ENCODE measurements at regions of chr12 and their contacts with region 1.

Region 1: GRCh38 chr12:94535510-94535921 is 75.8 kb upstream of the CEP83 start:
- DNase-seq: peak in 1 of 2 donors; percentile 26
- H3K4me3 ChIP-seq: no peak overlapping the region
- H3K27ac ChIP-seq: no peak overlapping the region
- H3K4me1 ChIP-seq: peaks cover 0 to 5% (median 0%) of the 10 kb centered on the region in 4 donors
- H3K27me3 ChIP-seq: no peaks in the 10 kb centered on the region
- CTCF ChIP-seq: no peak
- EP300 ChIP-seq: no peak
- POLR2A ChIP-seq: no peak

Region 2: GRCh38 chr12:94135896-94136295 is 399.6 kb before region 1 on chr12:
- intact Hi-C with region 1: loop called (anchors 2 kb)
- DNase-seq: no peak
- H3K4me3 ChIP-seq: no peak overlapping the region
- H3K27ac ChIP-seq: no peak overlapping the region
- H3K4me1 ChIP-seq: no peaks in the 10 kb centered on the region
- H3K27me3 ChIP-seq: no peaks in the 10 kb centered on the region
- CTCF ChIP-seq: no peak
- EP300 ChIP-seq: no peak
- POLR2A ChIP-seq: no peak

Region 3: DNA sequence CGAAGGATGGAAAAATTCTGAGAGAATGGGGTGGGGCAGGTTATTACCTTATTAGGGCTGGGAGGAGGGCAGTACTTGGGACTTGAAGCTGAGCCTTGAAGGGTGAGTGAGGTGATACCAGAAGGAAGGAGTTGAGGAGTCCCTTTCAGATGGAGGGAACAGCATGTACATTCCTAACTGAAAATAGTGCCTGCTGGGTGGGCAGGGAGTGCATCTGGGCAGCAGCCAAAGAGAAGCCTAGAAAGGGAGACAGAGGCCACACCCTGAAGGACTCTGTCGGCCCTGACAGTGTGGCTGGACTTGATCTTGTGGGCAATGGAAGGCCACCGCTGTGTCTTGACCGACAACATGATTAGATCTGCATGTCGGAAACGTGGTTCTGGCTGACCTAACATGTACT is 320.3 kb after region 1 on chr12:
- intact Hi-C with region 1: no loop called
- DNase-seq: no peak
- H3K4me3 ChIP-seq: no peak overlapping the region
- H3K27ac ChIP-seq: no peak overlapping the region
- H3K4me1 ChIP-seq: no peaks in the 10 kb centered on the region
- H3K27me3 ChIP-seq: no peaks in the 10 kb centered on the region
- CTCF ChIP-seq: no peak
- EP300 ChIP-seq: no peak
- POLR2A ChIP-seq: no peak

Region 4: DNA sequence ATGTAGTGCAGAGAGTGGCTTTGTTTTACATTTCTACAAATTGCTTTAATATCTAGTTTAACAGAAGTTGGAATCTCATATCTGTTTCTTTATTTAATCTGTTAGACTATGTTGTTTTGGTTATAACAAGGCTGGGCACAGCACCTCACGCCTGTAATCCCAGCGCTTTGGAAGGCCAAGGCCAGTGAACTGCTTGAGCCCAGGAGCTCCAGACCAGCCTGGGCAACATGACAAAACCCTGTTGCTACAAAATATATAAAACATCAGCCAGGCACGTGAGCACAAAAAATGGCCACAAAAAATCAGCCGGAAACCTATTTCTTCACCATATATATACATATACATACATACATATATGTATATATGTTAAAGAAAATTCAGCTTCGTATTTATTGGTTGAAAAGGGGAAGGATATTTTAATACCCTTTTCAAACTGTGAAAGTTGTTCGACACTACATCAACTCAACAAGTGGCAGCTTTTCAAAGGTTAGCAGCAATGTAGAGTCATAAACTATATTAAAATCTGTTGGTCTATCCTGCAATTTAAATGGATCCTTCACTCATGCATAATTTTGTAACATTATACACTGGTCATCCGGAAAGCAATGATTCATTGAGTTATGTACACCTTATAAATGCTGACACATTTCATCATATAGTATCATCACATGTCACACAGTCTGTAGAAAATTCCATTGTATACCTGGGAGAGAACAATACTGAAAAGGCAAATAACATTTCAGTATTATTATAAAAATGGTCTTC is 530.8 kb after region 1 on chr12:
- intact Hi-C with region 1: no loop called
- DNase-seq: no peak
- H3K4me3 ChIP-seq: no peak overlapping the region
- H3K27ac ChIP-seq: no peak overlapping the region
- H3K4me1 ChIP-seq: peaks cover 0 to 9% (median under 1%) of the 10 kb centered on the region in 4 donors
- H3K27me3 ChIP-seq: no peaks in the 10 kb centered on the region
- CTCF ChIP-seq: no peak
- EP300 ChIP-seq: no peak
- POLR2A ChIP-seq: no peak